ENCODE measurements at regions of chr19 and their contacts with region 1.

Region 1: DNA sequence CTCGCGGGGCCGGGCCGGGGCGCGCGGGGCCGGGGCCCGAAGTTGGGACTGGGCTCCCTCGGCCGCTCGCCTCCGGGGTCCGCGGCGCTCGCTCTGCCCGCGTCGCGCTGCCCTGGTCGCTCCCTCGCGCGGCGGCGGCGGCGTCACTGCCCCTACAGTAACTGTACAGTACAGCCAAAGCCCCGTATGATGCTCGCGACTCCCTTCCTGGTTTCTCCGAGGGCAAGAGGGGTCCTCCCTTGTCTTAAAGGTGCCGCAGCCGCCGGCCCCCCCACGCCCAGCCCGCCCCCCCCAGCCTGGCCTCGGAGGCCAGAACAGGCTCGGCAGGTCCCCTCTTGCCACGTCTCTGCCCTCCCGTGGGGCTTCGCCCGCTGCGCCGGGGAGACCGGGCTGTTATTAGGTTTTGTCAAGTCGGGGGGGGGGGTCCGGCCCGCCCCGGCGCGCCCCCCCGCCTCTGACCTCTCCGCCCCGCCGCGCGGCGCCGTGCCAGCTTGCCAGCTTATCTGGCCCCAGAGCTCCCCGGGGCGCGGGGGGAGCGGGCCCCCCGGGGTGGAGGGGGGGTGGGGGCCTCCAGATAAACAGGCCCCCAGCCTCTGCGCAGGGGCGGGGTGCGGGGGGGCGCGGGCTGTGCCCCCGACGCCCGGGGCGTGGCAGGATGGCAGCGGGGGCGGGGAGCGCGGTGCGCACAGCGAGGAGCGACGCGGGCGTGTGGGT is at the start of gene ZBTB7A:
- DNase-seq: peak; percentile 69 to 87 (median 79)
- ATAC-seq: peak; percentile 38 to 47 (median 44)
- H3K4me3 ChIP-seq: peak within 1 kb of the TSS; percentile 66 to 93
- H3K4me3 Mint-ChIP-seq: peak within 1 kb of the TSS; percentile 80 to 89 (median 81)
- H3K27ac ChIP-seq: peak within 1 kb of the TSS; percentile 78
- H3K27ac Mint-ChIP-seq: peak within 1 kb of the TSS; percentile 90 to 92
- H3K4me1 ChIP-seq: peaks cover 14 to 57% of the 10 kb centered on the region in 2 experiments
- H3K4me1 Mint-ChIP-seq: peaks cover 28 to 44% (median 41%) of the 10 kb centered on the region in 3 donors
- H3K27me3 ChIP-seq: no peaks in the 10 kb centered on the region
- H3K27me3 Mint-ChIP-seq: no peaks in the 10 kb centered on the region
- total RNA-seq, gene ZBTB7A: 43.6 to 85.7 (median 81.8) TPM

Region 2: DNA sequence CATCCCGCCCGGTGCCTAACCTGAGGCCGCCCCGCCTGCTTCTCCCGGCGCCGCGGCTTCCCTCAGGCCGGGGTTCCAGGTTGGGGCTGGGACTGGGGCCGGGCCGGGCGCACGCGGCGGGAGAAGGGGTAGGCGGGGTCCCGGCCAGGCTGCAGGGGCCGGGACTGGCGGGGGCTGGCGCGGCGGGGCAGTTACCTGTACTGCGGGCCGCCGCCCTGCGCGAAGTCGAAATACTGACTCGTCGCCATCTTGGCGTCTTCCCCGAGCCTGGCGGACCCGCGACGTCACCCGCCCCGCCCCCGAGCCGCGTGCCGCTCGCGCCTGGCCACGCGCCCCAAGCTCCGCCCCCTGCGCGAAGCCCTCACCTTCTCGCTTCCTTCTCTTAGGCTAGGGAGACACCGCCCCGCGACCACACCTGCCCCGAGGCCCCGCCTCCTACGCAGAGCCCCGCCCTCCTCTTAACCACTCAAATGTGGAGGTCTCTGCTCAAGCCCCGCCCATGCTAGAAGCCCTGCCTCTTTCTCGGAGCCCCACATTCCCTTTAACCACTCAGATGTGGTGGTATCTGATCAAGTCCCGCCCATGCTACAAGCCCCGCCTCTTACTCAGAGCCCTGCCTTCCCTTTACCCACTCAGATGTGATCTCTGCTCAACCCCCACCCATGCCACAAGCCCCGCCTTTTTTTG is 197.9 kb before region 1 on chr19 and contains the start of gene ZFR2:
- CTCF ChIA-PET with region 1: no interaction called
- POLR2A ChIA-PET with region 1: no interaction called
- DNase-seq: peak in 26 of 35 experiments; percentile 3 to 37 (median 17)
- ATAC-seq: peak in 3 of 4 experiments; percentile 45 to 49 (median 46)
- H3K4me3 ChIP-seq: no peak within 1 kb of the TSS
- H3K4me3 Mint-ChIP-seq: peak within 1 kb of the TSS; percentile 31 to 64 (median 39)
- H3K27ac ChIP-seq: no peak within 1 kb of the TSS
- H3K27ac Mint-ChIP-seq: no peak within 1 kb of the TSS
- H3K4me1 ChIP-seq: peaks cover 0 to 10% of the 10 kb centered on the region in 2 experiments
- H3K4me1 Mint-ChIP-seq: peaks cover 0 to 17% (median 13%) of the 10 kb centered on the region in 3 donors
- H3K27me3 ChIP-seq: peaks cover 4 to 62% of the 10 kb centered on the region in 2 experiments
- H3K27me3 Mint-ChIP-seq: peaks cover 40 to 52% of the 10 kb centered on the region in 2 donors
- total RNA-seq, gene ZFR2: 0.56 to 1.8 (median 1.4) TPM

Region 3: GRCh38 chr19:4081441-4082191 is 14.8 kb after region 1 on chr19:
- CTCF ChIA-PET with region 1: no interaction called
- POLR2A ChIA-PET with region 1: interaction called, 3 to 15 read pairs
- DNase-seq: no peak
- ATAC-seq: no peak
- H3K4me3 ChIP-seq: no peak overlapping the region
- H3K4me3 Mint-ChIP-seq: no peak overlapping the region
- H3K27ac ChIP-seq: no peak overlapping the region
- H3K27ac Mint-ChIP-seq: peak overlapping the region; percentile 23 to 69
- H3K4me1 ChIP-seq: peaks cover 33 to 81% of the 10 kb centered on the region in 2 experiments
- H3K4me1 Mint-ChIP-seq: peaks cover 34 to 62% (median 45%) of the 10 kb centered on the region in 3 donors
- H3K27me3 ChIP-seq: no peaks in the 10 kb centered on the region
- H3K27me3 Mint-ChIP-seq: no peaks in the 10 kb centered on the region

Measured in T-cell (primary cell).